ENCODE measurements at regions of chr1 and their contacts with region 1.

Region 1: DNA sequence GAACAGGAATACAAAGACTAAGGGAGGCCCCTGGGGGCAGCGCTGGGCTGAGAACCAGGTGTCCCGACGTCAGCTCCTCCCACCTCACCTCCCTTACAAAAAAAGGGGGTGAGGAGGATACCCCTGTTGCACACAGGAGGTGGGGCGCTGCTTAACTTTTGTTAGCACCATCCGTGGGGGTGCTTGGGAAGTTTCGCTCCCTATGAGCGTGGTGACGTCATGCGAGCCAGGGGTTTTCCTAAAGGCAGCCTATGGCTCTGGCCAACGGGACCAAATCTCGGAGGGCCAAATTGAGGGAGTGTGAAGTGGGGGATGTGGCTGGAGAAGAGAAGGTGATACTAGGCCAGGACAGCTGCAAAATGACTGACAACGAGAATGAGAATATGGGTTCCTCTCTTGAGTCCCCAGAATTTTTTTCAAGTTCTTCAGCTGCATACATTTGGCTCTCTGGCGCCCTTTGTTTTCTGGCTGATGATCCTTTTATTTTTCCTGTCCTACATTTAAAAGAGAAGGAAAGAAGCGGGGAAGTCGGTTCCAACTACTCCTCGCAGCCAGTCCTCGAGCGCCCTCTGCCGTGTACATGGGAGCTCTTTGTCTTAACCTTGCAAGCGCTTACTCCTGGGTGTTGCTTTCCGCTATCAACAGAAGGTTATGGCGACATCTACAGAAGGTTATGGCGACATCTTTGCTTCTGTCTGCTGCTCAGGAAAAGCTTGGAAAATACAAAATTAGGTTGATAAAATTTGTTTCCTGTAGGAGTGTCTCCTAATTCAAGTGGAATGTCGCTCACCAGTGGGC is 48.0 kb upstream of the ZC3H11B start:
- DNase-seq: peak; percentile 99
- ATAC-seq: peak; percentile 99
- H3K4me3 ChIP-seq: peak overlapping the region; percentile 16; the same call in 1 of the 2 replicates
- H3K27ac ChIP-seq: no peak overlapping the region
- H3K4me1 ChIP-seq: peaks cover 25% of the 10 kb centered on the region
- H3K27me3 ChIP-seq: no peaks in the 10 kb centered on the region
- CTCF ChIP-seq: peak; percentile 99

Region 2: GRCh38 chr1:218330043-218330623 is 1330.7 kb before region 1 on chr1:
- CTCF ChIA-PET with region 1: interaction called, 7 read pairs
- POLR2A ChIA-PET with region 1: no interaction called
- intact Hi-C with region 1: loop called (anchors 2 kb)
- DNase-seq: peak; percentile 81
- ATAC-seq: peak; percentile 75
- H3K4me3 ChIP-seq: no peak overlapping the region
- H3K27ac ChIP-seq: no peak overlapping the region
- H3K4me1 ChIP-seq: peaks cover 10% of the 10 kb centered on the region; the same call in 1 of the 2 replicates
- H3K27me3 ChIP-seq: no peaks in the 10 kb centered on the region
- CTCF ChIP-seq: peak; percentile 99

Region 3: GRCh38 chr1:219304227-219305226 is 356.3 kb before region 1 on chr1:
- CTCF ChIA-PET with region 1: no interaction called
- POLR2A ChIA-PET with region 1: no interaction called
- intact Hi-C with region 1: loop called (anchors 1 kb)
- DNase-seq: peak; percentile 99
- ATAC-seq: peak; percentile 92
- H3K4me3 ChIP-seq: peak overlapping the region; percentile 13; the same call in 1 of the 2 replicates
- H3K27ac ChIP-seq: peak overlapping the region; percentile 25
- H3K4me1 ChIP-seq: peaks cover 21% of the 10 kb centered on the region
- H3K27me3 ChIP-seq: no peaks in the 10 kb centered on the region
- CTCF ChIP-seq: peak; percentile 89

Region 4: DNA sequence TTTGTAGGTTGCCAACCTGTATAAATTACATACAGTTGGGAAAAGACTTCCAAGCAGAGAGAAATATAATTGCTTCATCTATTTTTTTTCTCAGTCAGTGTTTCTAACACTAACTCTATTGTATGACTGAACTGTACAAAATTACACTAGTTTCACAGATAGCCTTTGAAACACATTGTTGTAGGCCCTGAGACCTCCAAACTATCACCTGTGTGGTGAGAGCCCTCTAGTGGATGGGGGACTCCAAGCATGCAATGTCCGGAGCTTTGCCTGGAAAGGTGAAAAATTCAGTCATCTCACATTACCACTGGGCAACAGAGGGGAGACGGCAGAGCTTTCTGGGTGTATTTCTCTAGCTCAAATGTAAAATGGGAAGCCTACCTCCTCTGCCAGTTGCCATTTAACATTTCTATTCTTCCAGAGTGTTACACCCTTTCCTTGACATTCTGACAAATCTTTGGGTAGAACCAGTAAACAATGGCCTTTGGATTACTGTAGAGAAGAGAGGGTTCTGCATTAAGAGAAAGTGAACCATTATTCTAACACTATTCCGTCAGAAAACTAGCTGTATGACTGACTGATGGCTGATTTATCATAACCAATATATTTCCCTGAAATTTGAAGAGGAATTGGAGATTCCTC is 275.0 kb before region 1 on chr1:
- CTCF ChIA-PET with region 1: interaction called, 3 read pairs
- POLR2A ChIA-PET with region 1: no interaction called
- intact Hi-C with region 1: loop called (anchors 2 kb)
- DNase-seq: peak; percentile 96
- ATAC-seq: peak; percentile 98
- H3K4me3 ChIP-seq: no peak overlapping the region
- H3K27ac ChIP-seq: no peak overlapping the region
- H3K4me1 ChIP-seq: peaks cover 4% of the 10 kb centered on the region; the same call in 1 of the 2 replicates
- H3K27me3 ChIP-seq: no peaks in the 10 kb centered on the region
- CTCF ChIP-seq: peak; percentile 99